Activated CD4-positive, alpha-beta T cell treated with anti-CD3 and anti-CD28 coated beads for 36 hours (primary cell): ENCODE measurements at regions of chr19 and their contacts with region 1.

Region 1: DNA sequence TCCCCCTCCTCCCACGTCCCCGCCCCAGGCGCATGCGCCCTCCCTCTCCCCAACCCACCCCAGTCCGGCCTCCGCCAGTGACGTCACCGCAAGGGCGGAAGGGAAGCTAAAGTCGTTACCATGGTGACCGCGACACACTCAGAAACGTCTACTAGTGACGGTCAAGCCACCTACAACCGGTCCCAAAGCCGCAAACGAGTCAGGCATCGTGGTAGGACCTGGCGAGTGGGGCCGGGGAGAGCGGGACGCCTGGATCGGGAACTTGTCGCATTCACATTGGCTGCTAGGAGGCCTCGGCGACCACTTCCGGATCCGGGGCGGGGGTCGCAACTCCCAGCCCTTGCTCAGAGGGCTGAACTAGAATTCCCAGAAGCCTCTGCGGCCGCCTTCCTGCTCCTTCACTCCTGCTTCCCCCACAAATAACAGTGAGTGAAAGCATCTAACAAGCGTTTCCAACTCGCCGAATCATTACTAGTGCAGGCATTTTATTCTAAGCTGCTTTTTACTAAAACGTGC is at the start of gene ZSCAN5A:
- DNase-seq: peak; percentile 99
- ATAC-seq: peak; percentile 80
- H3K4me3 Mint-ChIP-seq: peak within 1 kb of the TSS; percentile 83
- H3K27ac Mint-ChIP-seq: peak within 1 kb of the TSS; percentile 100
- H3K4me1 Mint-ChIP-seq: peaks cover 23% of the 10 kb centered on the region
- H3K27me3 Mint-ChIP-seq: no peaks in the 10 kb centered on the region
- total RNA-seq, gene ZSCAN5A: 8.3 to 9.9 TPM

Region 2: GRCh38 chr19:55653758-55654539 is 660.7 kb before region 1 on chr19:
- CTCF ChIA-PET with region 1: no interaction called
- POLR2A ChIA-PET with region 1: no interaction called
- intact Hi-C with region 1: loop called in 1 of 2 experiments (anchors 1 kb)
- DNase-seq: peak; percentile 99
- ATAC-seq: peak; percentile 84
- H3K4me3 Mint-ChIP-seq: peak overlapping the region; percentile 86
- H3K27ac Mint-ChIP-seq: peak overlapping the region; percentile 98
- H3K4me1 Mint-ChIP-seq: peaks cover 37% of the 10 kb centered on the region
- H3K27me3 Mint-ChIP-seq: no peaks in the 10 kb centered on the region

Region 3: DNA sequence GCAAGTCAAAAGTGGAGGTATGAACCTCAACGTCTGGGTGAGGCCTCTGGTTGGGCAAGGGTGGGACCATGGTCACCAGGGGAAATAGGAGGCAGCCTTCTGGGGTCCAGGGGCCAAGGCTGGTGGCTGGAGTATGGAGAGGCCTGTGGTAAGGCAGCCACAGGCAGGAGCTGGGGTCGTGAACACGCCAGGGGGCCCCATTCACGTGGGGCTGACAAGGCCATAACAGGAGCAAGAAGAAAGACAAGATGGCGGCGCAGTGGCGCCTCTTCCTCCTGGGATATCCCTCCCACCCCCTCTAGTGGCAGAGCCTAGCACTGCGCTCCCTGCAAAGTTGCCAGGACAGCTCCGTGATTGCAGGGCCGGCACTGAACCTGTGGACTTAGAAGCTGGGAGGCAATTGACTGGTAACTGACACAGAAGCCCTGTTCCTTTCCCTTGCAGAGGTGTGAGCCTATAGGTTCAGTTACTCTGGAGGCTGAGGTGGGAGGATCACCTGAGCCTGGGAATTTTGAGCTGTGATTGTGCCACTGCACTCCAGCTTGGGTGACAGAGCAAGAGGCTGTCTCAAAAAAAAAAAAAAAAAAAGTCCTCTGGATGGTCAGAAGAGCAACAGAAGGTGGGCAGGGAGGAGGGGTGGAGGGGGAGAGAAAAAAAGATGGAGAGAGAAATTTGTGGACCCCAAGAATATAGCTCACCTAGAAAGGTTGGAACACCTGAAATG is 61.8 kb before region 1 on chr19:
- CTCF ChIA-PET with region 1: interaction called, 12 read pairs
- POLR2A ChIA-PET with region 1: interaction called, 3 read pairs
- intact Hi-C with region 1: loop called in 1 of 2 experiments (anchors 5 kb)
- DNase-seq: peak; percentile 90
- ATAC-seq: peak; percentile 85
- H3K4me3 Mint-ChIP-seq: no peak overlapping the region
- H3K27ac Mint-ChIP-seq: no peak overlapping the region
- H3K4me1 Mint-ChIP-seq: peaks cover 3% of the 10 kb centered on the region
- H3K27me3 Mint-ChIP-seq: no peaks in the 10 kb centered on the region

Region 4: GRCh38 chr19:56507446-56508289 is 193.0 kb after region 1 on chr19 and contains the start of gene ZNF471:
- CTCF ChIA-PET with region 1: no interaction called
- POLR2A ChIA-PET with region 1: no interaction called
- intact Hi-C with region 1: loop called in 1 of 2 experiments (anchors 1 kb)
- DNase-seq: peak; percentile 96
- ATAC-seq: peak; percentile 99
- H3K4me3 Mint-ChIP-seq: no peak within 1 kb of the TSS
- H3K27ac Mint-ChIP-seq: peak within 1 kb of the TSS; percentile 12
- H3K4me1 Mint-ChIP-seq: peaks cover 5% of the 10 kb centered on the region
- H3K27me3 Mint-ChIP-seq: peaks cover 2% of the 10 kb centered on the region
- total RNA-seq, gene ZNF471: 1.4 to 1.5 TPM

Region 5: GRCh38 chr19:56671613-56671994 is 357.0 kb after region 1 on chr19 and contains the start of gene ZNF835:
- CTCF ChIA-PET with region 1: no interaction called
- POLR2A ChIA-PET with region 1: no interaction called
- intact Hi-C with region 1: loop called in 1 of 2 experiments (anchors 2 kb)
- DNase-seq: peak; percentile 94
- ATAC-seq: peak; percentile 96
- H3K4me3 Mint-ChIP-seq: peak within 1 kb of the TSS; percentile 84
- H3K27ac Mint-ChIP-seq: peak within 1 kb of the TSS; percentile 87
- H3K4me1 Mint-ChIP-seq: peaks cover 11% of the 10 kb centered on the region
- H3K27me3 Mint-ChIP-seq: no peaks in the 10 kb centered on the region
- total RNA-seq, gene ZNF835: 2.8 to 4.5 TPM